Endothelial cell of umbilical vein (primary cell): ENCODE measurements at regions of chr2 and their contacts with region 1.

Region 1: DNA sequence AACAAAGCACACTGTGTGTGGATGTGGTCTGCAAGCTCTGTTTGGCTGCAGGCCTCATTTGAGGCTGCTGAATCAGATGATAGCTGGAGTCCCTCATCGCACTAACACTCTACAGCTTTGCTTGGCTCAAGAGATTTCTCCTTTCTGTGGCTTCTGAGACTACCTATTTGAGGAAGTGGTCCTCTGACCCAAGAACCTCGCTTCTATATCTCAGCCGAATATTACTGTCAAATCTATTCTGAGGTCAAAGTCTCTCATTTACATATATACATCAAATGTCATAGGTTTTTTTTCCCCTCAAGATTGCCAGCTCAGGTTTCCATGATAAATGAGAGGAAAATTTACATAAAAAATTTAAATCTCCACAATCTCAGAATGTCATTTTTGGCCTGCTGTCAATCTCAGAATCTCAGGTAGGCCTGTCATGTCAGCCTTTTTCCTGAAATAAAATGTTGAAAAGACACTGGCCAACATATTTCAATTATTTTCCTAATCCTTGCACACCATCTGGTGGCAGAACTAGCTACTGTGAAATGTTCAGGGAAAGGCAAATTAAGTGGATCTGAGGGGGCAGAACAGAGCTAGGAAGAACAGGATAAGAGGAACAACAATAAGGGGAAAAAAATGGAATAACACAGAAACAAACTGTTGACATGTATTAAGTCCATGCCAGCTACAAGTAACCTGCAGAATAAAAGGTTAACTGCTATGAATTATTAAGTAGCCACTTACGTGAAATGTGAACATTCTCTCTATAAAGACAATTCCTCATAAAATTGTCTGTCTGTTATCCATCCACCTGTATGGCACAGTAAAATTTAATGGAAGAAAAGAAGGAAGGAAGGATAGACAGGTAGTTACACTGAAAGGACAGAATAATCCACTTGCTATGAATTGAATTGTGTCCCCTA is 39.3 kb downstream of the AP1S3 start:
- DNase-seq: peak; percentile 73
- H3K4me3 ChIP-seq: no peak overlapping the region
- H3K27ac ChIP-seq: no peak overlapping the region
- H3K4me1 ChIP-seq: peaks cover 4% of the 10 kb centered on the region
- H3K27me3 ChIP-seq: no peaks in the 10 kb centered on the region
- CTCF ChIP-seq: peak; percentile 46 to 47
- POLR2A ChIP-seq: no peak

Region 2: GRCh38 chr2:223141606-223142005 is 656.5 kb before region 1 on chr2:
- CTCF ChIA-PET with region 1: no interaction called
- POLR2A ChIA-PET with region 1: no interaction called
- dilution Hi-C with region 1: no loop called
- intact Hi-C with region 1: no loop called
- DNase-seq: no peak
- H3K4me3 ChIP-seq: no peak overlapping the region
- H3K27ac ChIP-seq: no peak overlapping the region
- H3K4me1 ChIP-seq: no peaks in the 10 kb centered on the region
- H3K27me3 ChIP-seq: no peaks in the 10 kb centered on the region
- CTCF ChIP-seq: no peak
- POLR2A ChIP-seq: no peak

Region 3: GRCh38 chr2:223247136-223247535 is 550.9 kb before region 1 on chr2:
- CTCF ChIA-PET with region 1: interaction called, 52 read pairs
- POLR2A ChIA-PET with region 1: no interaction called
- dilution Hi-C with region 1: no loop called
- intact Hi-C with region 1: loop called (anchors 1 kb)
- DNase-seq: peak; percentile 40
- H3K4me3 ChIP-seq: no peak overlapping the region
- H3K27ac ChIP-seq: no peak overlapping the region
- H3K4me1 ChIP-seq: no peaks in the 10 kb centered on the region
- H3K27me3 ChIP-seq: no peaks in the 10 kb centered on the region
- CTCF ChIP-seq: peak; percentile 16 to 33
- POLR2A ChIP-seq: no peak

Region 4: GRCh38 chr2:223465793-223466192 is 332.3 kb before region 1 on chr2:
- CTCF ChIA-PET with region 1: interaction called, 70 read pairs
- POLR2A ChIA-PET with region 1: no interaction called
- dilution Hi-C with region 1: no loop called
- intact Hi-C with region 1: no loop called
- DNase-seq: peak; percentile 84
- H3K4me3 ChIP-seq: no peak overlapping the region
- H3K27ac ChIP-seq: no peak overlapping the region
- H3K4me1 ChIP-seq: peaks cover 11% of the 10 kb centered on the region
- H3K27me3 ChIP-seq: no peaks in the 10 kb centered on the region
- CTCF ChIP-seq: no peak
- POLR2A ChIP-seq: no peak

Region 5: GRCh38 chr2:223613017-223613950 is 184.8 kb before region 1 on chr2:
- CTCF ChIA-PET with region 1: interaction called, 3 read pairs
- POLR2A ChIA-PET with region 1: no interaction called
- dilution Hi-C with region 1: no loop called
- intact Hi-C with region 1: loop called (anchors 5 kb)
- DNase-seq: peak; percentile 94
- H3K4me3 ChIP-seq: peak overlapping the region in 1 of 3 experiments; percentile 41
- H3K27ac ChIP-seq: peak overlapping the region; percentile 30
- H3K4me1 ChIP-seq: peaks cover 10% of the 10 kb centered on the region
- H3K27me3 ChIP-seq: peaks cover under 1 to 2% of the 10 kb centered on the region in 2 experiments
- CTCF ChIP-seq: peak in 1 of 2 donors; percentile 8
- POLR2A ChIP-seq: no peak

Region 6: GRCh38 chr2:223697892-223698645 is 100.0 kb before region 1 on chr2:
- CTCF ChIA-PET with region 1: interaction called, 176 read pairs
- POLR2A ChIA-PET with region 1: no interaction called
- dilution Hi-C with region 1: no loop called
- intact Hi-C with region 1: no loop called
- DNase-seq: peak; percentile 18
- H3K4me3 ChIP-seq: no peak overlapping the region
- H3K27ac ChIP-seq: peak overlapping the region; percentile 87
- H3K4me1 ChIP-seq: peaks cover 38% of the 10 kb centered on the region
- H3K27me3 ChIP-seq: no peaks in the 10 kb centered on the region
- CTCF ChIP-seq: no peak
- POLR2A ChIP-seq: no peak

Region 7: DNA sequence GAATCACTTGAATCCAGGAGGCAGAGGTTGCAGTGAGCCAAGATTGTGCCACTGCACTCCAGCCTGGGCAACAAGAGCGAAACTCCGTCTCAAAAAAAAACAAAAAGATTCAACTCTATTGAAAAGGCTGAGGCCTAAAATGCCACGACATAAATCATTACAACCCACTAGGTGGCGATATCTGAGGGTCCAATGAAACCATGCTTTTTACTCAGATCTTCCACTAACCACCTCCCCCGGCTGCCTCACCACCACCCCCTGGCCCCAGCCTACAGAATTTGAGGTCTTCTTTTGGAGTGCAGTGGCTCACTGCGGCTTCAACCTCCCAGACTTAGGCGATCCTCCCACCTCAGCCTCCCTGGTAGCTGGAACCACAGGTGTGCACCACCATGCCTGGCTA is 18.2 kb before region 1 on chr2:
- CTCF ChIA-PET with region 1: interaction called, 14 read pairs
- POLR2A ChIA-PET with region 1: no interaction called
- dilution Hi-C with region 1: no loop called
- intact Hi-C with region 1: loop called (anchors 1 kb)
- DNase-seq: peak; percentile 53
- H3K4me3 ChIP-seq: no peak overlapping the region
- H3K27ac ChIP-seq: no peak overlapping the region
- H3K4me1 ChIP-seq: no peaks in the 10 kb centered on the region
- H3K27me3 ChIP-seq: no peaks in the 10 kb centered on the region
- CTCF ChIP-seq: peak; percentile 26 to 46
- POLR2A ChIP-seq: no peak